Activated naive CD8-positive, alpha-beta T cell treated with anti-CD3 and anti-CD28 coated beads, Interleukin-2, amount 10 ng/mL, durations not matched to agents 7 days and 5 days (primary cell): ENCODE measurements at regions of chr2 and their contacts with region 1.

Region 1: DNA sequence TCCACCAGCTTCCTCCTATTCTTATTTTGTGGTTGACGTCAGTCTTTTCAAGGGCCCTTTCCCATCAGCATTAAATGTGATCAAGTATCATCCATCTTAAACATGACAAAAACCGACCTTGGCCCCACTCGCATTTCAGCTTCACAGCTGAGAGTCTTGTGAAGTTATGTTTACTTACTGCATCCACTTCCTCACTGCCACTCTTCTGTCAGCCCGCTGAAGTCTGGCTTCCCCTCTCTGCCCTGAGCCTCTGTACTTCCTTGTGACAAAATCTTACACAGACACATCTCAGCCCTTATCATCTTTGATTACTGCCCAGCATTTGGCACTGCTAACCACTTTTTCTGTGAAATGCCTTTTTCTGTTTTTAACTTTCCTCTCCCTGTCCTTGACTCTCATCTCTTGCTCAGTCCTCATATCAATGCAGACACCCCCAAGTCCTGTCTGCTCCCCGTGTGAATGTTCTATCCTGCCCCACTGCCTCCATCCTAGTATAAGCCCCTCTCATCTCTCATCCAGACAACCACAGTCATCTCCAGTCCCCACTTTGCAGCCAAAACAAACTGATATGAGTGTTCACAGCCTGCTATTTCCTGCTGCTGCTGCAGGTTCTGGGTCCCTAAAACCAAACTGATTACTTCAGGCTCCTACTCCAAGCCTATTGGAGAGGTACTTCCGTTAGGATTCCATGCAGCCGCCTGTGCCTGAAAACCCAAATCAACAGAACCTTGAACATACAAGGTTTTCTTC is 31.4 kb downstream of the FOSL2 start:
- DNase-seq: no peak
- ATAC-seq: peak; percentile 86
- H3K4me3 Mint-ChIP-seq: peak overlapping the region; percentile 78
- H3K27ac Mint-ChIP-seq: peak overlapping the region; percentile 96
- H3K4me1 Mint-ChIP-seq: peaks cover 52% of the 10 kb centered on the region
- H3K27me3 Mint-ChIP-seq: no peaks in the 10 kb centered on the region

Region 2: DNA sequence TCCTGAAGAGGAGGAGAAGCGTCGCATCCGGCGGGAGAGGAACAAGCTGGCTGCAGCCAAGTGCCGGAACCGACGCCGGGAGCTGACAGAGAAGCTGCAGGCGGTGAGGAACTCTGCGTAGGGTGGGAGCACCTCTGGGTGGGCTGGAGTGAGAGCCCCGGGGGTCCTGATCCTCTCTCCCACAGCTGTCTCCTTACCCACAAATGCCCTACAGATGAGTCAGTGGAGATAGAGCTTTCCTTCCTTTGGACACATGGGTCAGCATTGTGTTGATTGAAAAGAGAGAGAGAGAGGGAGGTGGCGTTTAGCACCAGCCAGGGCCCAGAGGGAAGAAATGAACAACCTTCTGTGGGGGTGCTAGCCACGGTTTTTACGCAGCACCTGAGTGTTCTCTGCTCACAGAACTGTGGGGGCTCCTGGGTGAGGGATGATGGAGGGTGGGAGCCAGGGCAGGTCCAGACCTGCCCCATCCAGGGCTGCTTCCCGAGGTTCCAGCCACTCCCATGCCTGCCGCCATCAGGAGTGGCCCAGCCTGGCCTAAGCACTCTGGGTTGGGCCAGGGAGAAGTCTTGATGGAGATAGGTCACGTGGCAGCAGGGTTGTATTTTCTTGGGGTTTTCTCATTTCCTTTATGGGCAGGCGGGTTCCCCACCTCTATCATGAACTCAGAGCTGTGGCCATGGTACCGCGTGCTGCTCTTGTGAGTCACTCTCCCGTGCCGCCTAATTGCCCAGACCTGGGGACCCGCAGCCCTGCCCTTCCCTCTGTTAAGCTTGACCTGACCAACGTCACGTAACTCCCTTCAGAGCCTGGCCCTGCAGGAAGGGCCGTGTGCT is 15.0 kb before region 1 on chr2:
- POLR2A ChIA-PET with region 1: interaction called, 12 read pairs
- DNase-seq: peak; percentile 75
- ATAC-seq: peak; percentile 69
- H3K4me3 Mint-ChIP-seq: peak overlapping the region; percentile 63
- H3K27ac Mint-ChIP-seq: peak overlapping the region; percentile 96
- H3K4me1 Mint-ChIP-seq: peaks cover 59% of the 10 kb centered on the region
- H3K27me3 Mint-ChIP-seq: no peaks in the 10 kb centered on the region

Region 3: GRCh38 chr2:28435814-28436351 is 11.9 kb after region 1 on chr2:
- POLR2A ChIA-PET with region 1: interaction called, 17 read pairs
- DNase-seq: no peak
- ATAC-seq: no peak
- H3K4me3 Mint-ChIP-seq: no peak overlapping the region
- H3K27ac Mint-ChIP-seq: peak overlapping the region; percentile 30
- H3K4me1 Mint-ChIP-seq: peaks cover 57% of the 10 kb centered on the region
- H3K27me3 Mint-ChIP-seq: no peaks in the 10 kb centered on the region